ENCODE measurements at regions of chr11 and their contacts with region 1.

Region 1: DNA sequence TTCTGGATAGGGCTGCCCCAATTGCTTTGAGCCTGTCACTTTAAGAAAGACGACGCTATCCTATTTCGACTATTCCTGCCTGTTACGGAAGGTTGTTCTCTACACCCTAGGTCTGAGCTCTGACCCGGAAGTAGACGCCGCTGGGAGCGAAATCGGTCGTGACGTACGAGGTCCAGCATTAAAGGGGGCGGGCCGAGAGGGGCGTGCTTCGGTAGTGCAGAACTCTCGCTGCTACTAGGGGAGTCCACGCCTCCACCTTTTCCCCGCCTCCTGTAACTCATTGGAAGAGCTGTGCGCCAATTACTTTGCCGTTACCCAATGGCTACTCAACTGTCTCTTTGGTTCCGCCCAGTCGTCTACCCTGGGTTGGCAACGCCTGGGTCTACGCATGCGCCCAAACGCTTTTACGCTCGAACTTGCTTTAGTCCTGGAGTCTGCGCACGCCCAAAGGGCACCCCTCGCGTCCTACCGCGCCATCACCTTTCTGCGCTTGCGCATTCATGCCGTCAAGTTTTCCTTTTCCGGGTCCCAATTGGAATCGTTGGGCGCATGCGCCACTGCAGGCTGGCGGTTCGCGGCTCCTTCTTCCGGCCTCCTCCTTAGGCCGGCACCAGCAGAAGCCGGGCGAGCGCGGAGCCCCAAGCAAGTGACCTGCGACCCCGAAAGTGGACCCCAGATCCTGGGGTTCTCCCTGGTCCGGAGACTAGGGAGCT is at the start of gene PCNX3:
- DNase-seq: peak; percentile 100
- H3K4me3 Mint-ChIP-seq: peak within 1 kb of the TSS; percentile 96
- H3K27ac Mint-ChIP-seq: peak within 1 kb of the TSS; percentile 98
- H3K4me1 Mint-ChIP-seq: peaks cover 43% of the 10 kb centered on the region
- H3K27me3 Mint-ChIP-seq: peaks cover 3% of the 10 kb centered on the region
- total RNA-seq, gene PCNX3: 29.8 to 32.1 TPM

Region 2: GRCh38 chr11:65540297-65541092 is 74.9 kb before region 1 on chr11:
- CTCF ChIA-PET with region 1: interaction called, 39 read pairs
- POLR2A ChIA-PET with region 1: interaction called, 6 read pairs
- intact Hi-C with region 1: loop called (anchors 1 kb)
- DNase-seq: peak; percentile 94
- H3K4me3 Mint-ChIP-seq: peak overlapping the region; percentile 79
- H3K27ac Mint-ChIP-seq: peak overlapping the region; percentile 87
- H3K4me1 Mint-ChIP-seq: peaks cover 20% of the 10 kb centered on the region
- H3K27me3 Mint-ChIP-seq: no peaks in the 10 kb centered on the region

Region 3: GRCh38 chr11:65575568-65576231 is 39.7 kb before region 1 on chr11 and contains the start of gene EHBP1L1:
- CTCF ChIA-PET with region 1: interaction called, 33 read pairs
- POLR2A ChIA-PET with region 1: interaction called, 24 read pairs
- intact Hi-C with region 1: loop called (anchors 1 kb)
- DNase-seq: peak; percentile 87
- H3K4me3 Mint-ChIP-seq: peak within 1 kb of the TSS; percentile 90
- H3K27ac Mint-ChIP-seq: peak within 1 kb of the TSS; percentile 93
- H3K4me1 Mint-ChIP-seq: peaks cover 47% of the 10 kb centered on the region
- H3K27me3 Mint-ChIP-seq: no peaks in the 10 kb centered on the region
- total RNA-seq, gene EHBP1L1: 137 to 141 TPM

Region 4: GRCh38 chr11:65593518-65594298 is 21.7 kb before region 1 on chr11:
- CTCF ChIA-PET with region 1: interaction called, 22 read pairs
- POLR2A ChIA-PET with region 1: interaction called, 8 read pairs
- intact Hi-C with region 1: loop called (anchors 2 kb)
- DNase-seq: peak; percentile 50
- H3K4me3 Mint-ChIP-seq: no peak overlapping the region
- H3K27ac Mint-ChIP-seq: peak overlapping the region; percentile 42
- H3K4me1 Mint-ChIP-seq: peaks cover 13% of the 10 kb centered on the region
- H3K27me3 Mint-ChIP-seq: no peaks in the 10 kb centered on the region

Region 5: GRCh38 chr11:65637794-65638317 is 22.5 kb after region 1 on chr11 and contains the start of gene SIPA1:
- CTCF ChIA-PET with region 1: interaction called, 5 read pairs
- POLR2A ChIA-PET with region 1: interaction called, 6 read pairs
- intact Hi-C with region 1: loop called (anchors 1 kb)
- DNase-seq: peak; percentile 75
- H3K4me3 Mint-ChIP-seq: peak within 1 kb of the TSS; percentile 85
- H3K27ac Mint-ChIP-seq: peak within 1 kb of the TSS; percentile 95
- H3K4me1 Mint-ChIP-seq: peaks cover 38% of the 10 kb centered on the region
- H3K27me3 Mint-ChIP-seq: no peaks in the 10 kb centered on the region
- total RNA-seq, gene SIPA1: 163 to 167 TPM

Region 6: DNA sequence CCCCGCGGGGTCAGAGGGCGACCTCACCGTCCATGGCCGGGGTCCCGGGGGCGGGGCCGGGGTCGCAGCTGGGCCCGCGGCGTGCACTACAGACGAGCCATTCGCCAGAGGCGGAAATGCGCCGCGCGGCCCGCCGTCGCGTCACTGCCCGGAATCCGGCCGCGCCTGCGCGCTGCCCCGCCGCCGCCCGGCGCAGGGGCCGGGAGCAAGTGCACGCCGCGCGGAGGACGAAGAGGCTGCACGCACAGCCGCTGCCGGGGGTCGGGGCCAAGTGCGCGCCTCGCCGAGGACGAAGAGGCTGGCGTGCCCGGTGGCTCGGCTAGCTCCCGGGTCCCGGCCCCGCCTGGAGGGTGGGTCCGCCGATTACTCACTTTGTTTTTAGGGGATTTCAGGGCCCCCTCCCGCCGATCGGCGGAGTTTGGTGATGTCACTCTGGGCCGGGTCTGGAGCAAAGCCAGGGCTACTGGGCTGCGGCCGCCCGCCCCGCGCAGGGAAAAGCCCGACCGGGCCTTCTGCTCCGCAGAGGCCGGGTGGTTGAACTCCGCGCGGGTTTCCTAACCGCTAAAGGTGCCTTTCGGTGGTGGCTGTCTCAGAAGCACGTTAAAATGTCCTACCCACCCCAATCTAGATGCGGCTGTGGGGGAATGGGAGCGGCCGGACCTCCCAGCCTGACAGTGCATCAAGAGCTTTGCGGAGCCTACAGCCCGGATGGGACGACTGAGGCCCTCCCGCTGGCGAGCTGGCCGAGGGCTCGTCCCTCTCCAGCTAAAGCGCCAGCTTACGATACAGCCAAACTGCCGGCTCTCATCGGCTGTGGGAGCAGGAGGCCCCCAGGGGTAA is 47.6 kb after region 1 on chr11 and contains the start of gene RELA:
- CTCF ChIA-PET with region 1: interaction called, 5 read pairs
- POLR2A ChIA-PET with region 1: interaction called, 12 read pairs
- intact Hi-C with region 1: loop called (anchors 1 kb)
- DNase-seq: peak; percentile 95
- H3K4me3 Mint-ChIP-seq: peak within 1 kb of the TSS; percentile 85
- H3K27ac Mint-ChIP-seq: peak within 1 kb of the TSS; percentile 95
- H3K4me1 Mint-ChIP-seq: peaks cover 38% of the 10 kb centered on the region
- H3K27me3 Mint-ChIP-seq: no peaks in the 10 kb centered on the region
- total RNA-seq, gene RELA: 74.9 to 76.5 TPM

Region 7: DNA sequence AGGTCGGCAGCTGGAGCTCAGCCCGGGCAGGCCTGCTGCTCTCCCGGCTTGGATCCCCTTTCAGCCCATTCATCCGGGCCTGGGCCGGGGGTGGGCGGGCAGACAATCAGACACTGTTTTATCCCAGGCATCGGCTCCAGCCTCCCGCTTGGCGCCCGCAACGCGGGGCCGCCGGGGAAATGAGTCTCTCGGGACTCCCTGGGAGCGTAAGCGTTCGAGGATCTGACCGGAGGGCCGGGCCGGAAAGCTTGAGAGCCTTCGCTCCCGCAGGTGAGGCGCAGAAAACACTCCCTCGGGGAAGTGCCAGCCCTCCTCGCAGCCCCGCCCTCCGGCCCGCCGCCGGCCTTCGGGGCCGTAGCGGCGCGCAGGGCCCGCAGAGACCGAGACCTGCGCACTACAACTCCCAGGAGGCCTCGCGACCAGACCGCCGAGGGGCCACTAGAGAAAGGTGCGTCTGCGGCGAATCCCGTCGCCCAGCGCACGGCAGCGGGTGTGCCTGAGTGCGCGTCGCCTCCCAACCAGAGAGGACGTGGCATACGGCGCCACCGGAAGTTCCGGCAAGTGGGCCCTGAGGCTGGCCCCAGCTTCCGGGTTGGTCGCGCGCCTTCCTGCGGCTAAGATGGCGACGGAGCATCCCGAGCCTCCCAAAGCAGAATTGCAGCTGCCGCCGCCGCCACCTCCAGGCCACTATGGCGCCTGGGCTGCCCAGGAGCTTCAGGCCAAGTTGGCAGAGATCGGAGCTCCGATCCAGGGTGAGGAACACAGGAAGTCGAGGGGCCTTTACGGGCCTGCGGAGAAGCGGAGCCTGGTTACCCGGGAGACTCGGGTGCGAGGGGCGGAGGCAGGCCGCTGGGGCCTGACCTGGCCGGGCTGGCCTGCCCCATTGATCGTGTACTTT is 436.6 kb after region 1 on chr11 and contains the start of gene SF3B2:
- CTCF ChIA-PET with region 1: no interaction called
- POLR2A ChIA-PET with region 1: no interaction called
- intact Hi-C with region 1: loop called (anchors 1 kb)
- DNase-seq: peak; percentile 99
- H3K4me3 Mint-ChIP-seq: peak within 1 kb of the TSS; percentile 100
- H3K27ac Mint-ChIP-seq: peak within 1 kb of the TSS; percentile 97
- H3K4me1 Mint-ChIP-seq: peaks cover 41% of the 10 kb centered on the region
- H3K27me3 Mint-ChIP-seq: peaks cover 5% of the 10 kb centered on the region
- total RNA-seq, gene SF3B2: 271 to 274 TPM

Region 8: GRCh38 chr11:66591175-66591574 is 975.8 kb after region 1 on chr11:
- CTCF ChIA-PET with region 1: no interaction called
- POLR2A ChIA-PET with region 1: no interaction called
- intact Hi-C with region 1: no loop called
- DNase-seq: no peak
- H3K4me3 Mint-ChIP-seq: no peak overlapping the region
- H3K27ac Mint-ChIP-seq: no peak overlapping the region
- H3K4me1 Mint-ChIP-seq: peaks cover 30% of the 10 kb centered on the region
- H3K27me3 Mint-ChIP-seq: no peaks in the 10 kb centered on the region